Left ventricle myocardium superior (tissue), 1 donor: ENCODE measurements at regions of chr1 and their contacts with region 1.

Region 1: GRCh38 chr1:61851849-61852669 is 109.8 kb downstream of the PATJ start:
- DNase-seq: no peak
- ATAC-seq: peak; percentile 74

Region 2: GRCh38 chr1:59971464-59971911 is 1880.6 kb before region 1 on chr1:
- intact Hi-C with region 1: loop called (anchors 10 kb)
- DNase-seq: peak; percentile 77
- ATAC-seq: peak; percentile 84

Region 3: GRCh38 chr1:61244114-61244513 is 607.9 kb before region 1 on chr1:
- intact Hi-C with region 1: no loop called
- DNase-seq: no peak
- ATAC-seq: peak; percentile 23